ENCODE measurements at regions of chr5 and their contacts with region 1.

Region 1: DNA sequence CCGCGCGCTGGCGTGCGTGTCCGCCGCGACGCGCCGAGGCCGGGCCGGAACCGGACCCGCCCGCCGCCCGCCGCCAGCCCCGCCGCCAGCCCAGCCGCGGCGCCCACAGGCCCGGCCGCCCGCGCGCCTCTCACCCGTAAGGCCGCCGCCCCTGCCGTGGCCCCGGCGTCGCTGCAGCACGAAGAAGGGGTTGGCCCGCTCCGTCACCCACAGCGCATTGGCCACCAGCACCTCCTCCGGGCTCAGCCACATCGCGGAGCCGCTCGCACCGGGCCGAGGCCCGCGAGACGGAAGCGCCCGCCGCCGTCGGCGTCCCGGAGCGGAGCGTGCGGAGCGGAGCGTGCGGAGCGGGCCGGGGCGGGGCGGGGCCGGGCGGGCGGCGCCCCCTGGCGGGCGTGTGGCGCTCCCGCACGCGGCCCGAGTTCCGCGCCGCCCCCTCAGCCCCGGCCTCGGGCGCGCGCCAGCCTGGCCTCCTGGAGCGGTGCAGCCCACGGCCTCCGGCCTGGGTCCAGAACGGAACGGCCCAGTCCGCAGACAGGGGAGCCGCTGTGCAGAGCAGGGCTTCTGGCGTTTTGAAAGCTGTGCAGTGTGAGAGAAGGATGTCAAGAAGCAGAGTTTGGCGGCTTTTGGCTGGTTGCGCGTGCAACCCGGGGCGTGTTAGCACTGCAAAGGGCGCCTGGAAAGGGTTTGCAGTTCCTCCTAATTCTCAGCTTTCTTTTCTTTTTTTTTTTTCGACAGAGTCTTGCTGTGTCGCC is at the start of gene TBC1D9B:
- DNase-seq: peak; percentile 59 to 74 (median 69)
- H3K4me3 ChIP-seq: peak within 1 kb of the TSS in 3 of 4 donors; percentile 18 to 70 (median 66)
- H3K27ac ChIP-seq: peak within 1 kb of the TSS; percentile 13 to 93 (median 77)
- H3K4me1 ChIP-seq: peaks cover 15 to 28% of the 10 kb centered on the region in 2 donors
- H3K27me3 ChIP-seq: no peaks in the 10 kb centered on the region
- CTCF ChIP-seq: peak in 3 of 6 experiments; percentile 39 to 70 (median 51)
- POLR2A ChIP-seq: peak in 1 of 2 donors; percentile 59
- total RNA-seq, gene TBC1D9B: 30.7 to 192 (median 159) TPM

Region 2: DNA sequence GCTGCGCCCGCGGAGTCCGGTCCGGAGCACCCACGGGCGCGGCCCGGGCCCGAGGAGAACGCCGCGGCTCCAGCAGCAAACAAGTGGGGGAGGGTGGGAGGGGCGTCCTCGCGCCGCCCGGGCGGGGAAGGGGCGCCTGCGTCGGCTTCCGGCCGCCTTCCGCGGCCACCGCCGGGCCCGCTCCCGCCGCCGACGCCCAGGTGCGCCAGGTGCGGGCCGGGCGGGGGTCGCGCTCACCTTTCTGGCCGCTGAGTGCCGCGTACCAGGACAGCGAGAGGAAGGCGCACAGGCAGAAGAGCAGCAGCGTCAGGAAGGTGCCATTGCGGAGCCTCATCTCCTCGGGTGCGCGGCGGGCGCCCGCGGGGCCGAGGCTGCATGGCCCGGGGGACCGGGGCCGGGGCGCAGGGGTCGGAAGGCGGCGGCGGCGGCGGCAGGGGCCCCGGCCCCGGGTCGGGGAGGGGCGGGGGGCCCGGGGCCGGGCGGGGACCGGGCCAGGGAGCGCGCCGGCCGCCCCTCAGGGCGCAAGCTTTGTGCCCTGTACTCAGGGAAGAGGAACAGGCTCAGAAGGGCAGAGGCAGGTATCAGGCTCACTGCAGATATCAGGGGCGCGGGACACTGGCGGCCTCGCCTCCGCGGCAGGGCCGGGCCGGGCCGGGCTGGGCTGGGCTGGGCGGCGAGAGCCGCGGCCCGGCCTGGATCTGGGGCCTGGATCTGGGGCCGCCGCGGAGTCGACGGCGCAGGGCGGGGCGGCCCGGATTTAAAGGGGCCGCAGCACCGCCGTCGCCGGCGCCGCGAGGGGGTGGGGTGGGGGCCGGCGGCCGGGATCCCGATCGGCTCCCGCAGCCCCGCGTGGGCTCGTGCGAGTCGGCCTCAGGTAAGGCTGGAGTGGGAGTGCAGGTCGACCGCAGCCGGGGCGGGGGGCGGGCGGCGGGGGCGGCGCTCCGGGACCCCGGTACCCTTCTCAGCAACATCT is 101.2 kb before region 1 on chr5 and contains the start of gene MGAT4B:
- intact Hi-C with region 1: loop called in 1 of 2 experiments (anchors 10 kb)
- DNase-seq: peak; percentile 75 to 85 (median 78)
- H3K4me3 ChIP-seq: peak within 1 kb of the TSS; percentile 24 to 84 (median 68)
- H3K27ac ChIP-seq: peak within 1 kb of the TSS; percentile 14 to 93 (median 88)
- H3K4me1 ChIP-seq: peaks cover 37 to 48% of the 10 kb centered on the region in 2 donors
- H3K27me3 ChIP-seq: no peaks in the 10 kb centered on the region
- CTCF ChIP-seq: peak in 1 of 6 experiments; percentile 5
- POLR2A ChIP-seq: peak; percentile 72 to 75
- total RNA-seq, gene MGAT4B: 88.6 to 242 (median 215) TPM

Region 3: DNA sequence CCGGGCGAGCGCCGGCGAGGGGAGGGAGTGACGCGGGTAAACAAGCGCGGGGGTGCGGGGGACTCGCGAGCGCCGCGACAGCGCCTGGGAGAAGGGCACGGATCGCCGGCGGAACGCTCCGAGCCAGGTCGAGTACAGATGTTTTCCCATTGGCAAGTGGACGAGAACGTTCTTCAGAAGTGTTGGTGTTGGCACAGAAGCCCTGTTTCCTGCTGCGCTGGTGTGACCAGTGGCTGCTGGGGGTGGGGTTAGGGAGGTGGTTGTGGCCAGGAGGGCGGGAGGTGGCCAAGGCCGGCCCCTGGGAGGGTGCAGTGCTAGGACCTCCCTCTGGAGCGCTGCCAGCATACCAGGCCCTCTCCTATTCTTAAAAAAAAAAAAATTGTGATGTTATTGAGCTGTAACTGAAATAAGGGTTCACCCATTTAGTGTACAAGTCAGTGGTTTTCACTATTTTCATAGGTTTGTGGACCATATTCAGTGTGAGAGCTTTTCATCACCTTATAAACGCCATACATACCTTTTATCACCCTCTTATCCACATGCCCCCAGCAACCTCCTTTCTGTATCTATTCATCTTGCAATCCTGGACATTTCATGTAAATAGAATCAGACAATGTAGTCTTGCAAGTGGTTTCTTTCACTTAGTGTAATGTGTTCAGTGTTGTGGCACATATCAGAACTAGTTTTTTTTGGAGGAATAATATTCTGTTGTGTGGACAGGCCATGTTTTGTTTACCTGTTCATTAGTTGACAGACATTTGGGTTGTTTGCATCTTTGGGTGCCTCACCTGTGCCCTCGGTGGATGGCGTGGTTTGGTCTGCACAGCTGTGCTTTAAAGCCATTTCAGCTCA is 85.9 kb before region 1 on chr5:
- intact Hi-C with region 1: loop called in 1 of 2 experiments (anchors 10 kb)
- DNase-seq: peak; percentile 94 to 98 (median 98)
- H3K4me3 ChIP-seq: peak overlapping the region; percentile 52 to 99 (median 86)
- H3K27ac ChIP-seq: peak overlapping the region; percentile 89 to 100 (median 99)
- H3K4me1 ChIP-seq: peaks cover 63 to 81% of the 10 kb centered on the region in 2 donors
- H3K27me3 ChIP-seq: no peaks in the 10 kb centered on the region
- CTCF ChIP-seq: no peak
- POLR2A ChIP-seq: peak; percentile 68 to 94

Region 4: GRCh38 chr5:180071531-180072255 is 163.9 kb after region 1 on chr5 and contains the start of gene RNF130:
- intact Hi-C with region 1: loop called in 1 of 2 experiments (anchors 10 kb)
- DNase-seq: peak; percentile 93 to 96 (median 95)
- H3K4me3 ChIP-seq: peak within 1 kb of the TSS; percentile 66 to 96 (median 79)
- H3K27ac ChIP-seq: peak within 1 kb of the TSS; percentile 80 to 99 (median 96)
- H3K4me1 ChIP-seq: peaks cover 12 to 20% of the 10 kb centered on the region in 2 donors
- H3K27me3 ChIP-seq: no peaks in the 10 kb centered on the region
- CTCF ChIP-seq: no peak
- POLR2A ChIP-seq: peak; percentile 29 to 80
- total RNA-seq, gene RNF130: 53.5 to 138 (median 79.5) TPM

Region 5: GRCh38 chr5:180084688-180085561 is 177.2 kb after region 1 on chr5:
- intact Hi-C with region 1: loop called in 1 of 2 experiments (anchors 10 kb)
- DNase-seq: peak in 4 of 7 donors; percentile 46 to 53 (median 50)
- H3K4me3 ChIP-seq: no peak overlapping the region
- H3K27ac ChIP-seq: no peak overlapping the region
- H3K4me1 ChIP-seq: peaks cover 4 to 8% of the 10 kb centered on the region in 2 donors
- H3K27me3 ChIP-seq: no peaks in the 10 kb centered on the region
- CTCF ChIP-seq: no peak
- POLR2A ChIP-seq: no peak

Measured in adrenal gland (tissue), 19 donors.